ENCODE measurements at regions of chr5 and their contacts with region 1.

Region 1: DNA sequence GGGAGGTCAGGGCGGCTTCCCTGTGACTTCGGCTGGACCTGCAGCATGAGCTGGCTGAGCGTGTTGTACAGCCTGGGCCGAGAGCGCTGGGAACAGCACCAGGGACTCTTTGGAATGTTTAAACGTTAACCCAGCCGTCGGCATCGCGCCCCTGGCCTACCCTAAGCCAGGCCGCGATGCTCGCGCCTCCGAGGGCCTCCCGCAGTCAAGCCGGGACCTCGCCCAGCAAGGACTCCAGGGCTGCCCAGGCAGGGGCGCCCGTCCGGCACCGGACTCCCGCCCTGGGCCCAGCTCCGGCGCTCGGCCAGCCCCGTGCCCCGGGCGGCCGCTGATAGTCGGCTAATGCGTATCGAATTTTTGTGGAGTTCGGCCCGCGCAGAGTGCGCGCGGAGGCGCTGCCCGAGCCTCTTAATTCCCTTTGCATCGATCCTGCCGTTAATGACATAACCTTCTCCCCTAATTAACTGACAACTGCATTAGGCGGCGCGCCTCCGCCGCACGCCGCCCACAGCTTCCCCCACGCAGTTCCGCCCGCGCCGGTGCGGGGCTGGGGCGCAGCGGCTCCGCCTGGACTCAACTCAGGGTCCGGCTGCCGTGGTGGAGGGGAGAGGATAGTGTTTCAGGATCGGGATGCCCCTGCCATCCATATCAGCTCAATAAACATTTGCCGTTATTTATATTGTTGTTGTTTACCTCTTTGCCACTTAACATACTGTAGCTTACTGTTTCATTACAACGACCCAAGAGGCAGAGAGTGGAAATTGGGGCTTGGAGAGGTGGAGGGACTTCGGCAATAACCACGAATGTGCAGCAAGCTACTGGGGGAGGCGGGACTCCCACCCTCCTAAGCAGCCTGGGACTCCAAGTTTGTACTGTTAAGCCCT is 28.8 kb upstream of the CDC23 start:
- DNase-seq: peak; percentile 82

Region 2: GRCh38 chr5:138438724-138439476 is 197.0 kb after region 1 on chr5 and contains the start of gene REEP2:
- intact Hi-C with region 1: no loop called
- DNase-seq: no peak
- total RNA-seq, gene REEP2: 12.5 to 13.0 TPM

Region 3: DNA sequence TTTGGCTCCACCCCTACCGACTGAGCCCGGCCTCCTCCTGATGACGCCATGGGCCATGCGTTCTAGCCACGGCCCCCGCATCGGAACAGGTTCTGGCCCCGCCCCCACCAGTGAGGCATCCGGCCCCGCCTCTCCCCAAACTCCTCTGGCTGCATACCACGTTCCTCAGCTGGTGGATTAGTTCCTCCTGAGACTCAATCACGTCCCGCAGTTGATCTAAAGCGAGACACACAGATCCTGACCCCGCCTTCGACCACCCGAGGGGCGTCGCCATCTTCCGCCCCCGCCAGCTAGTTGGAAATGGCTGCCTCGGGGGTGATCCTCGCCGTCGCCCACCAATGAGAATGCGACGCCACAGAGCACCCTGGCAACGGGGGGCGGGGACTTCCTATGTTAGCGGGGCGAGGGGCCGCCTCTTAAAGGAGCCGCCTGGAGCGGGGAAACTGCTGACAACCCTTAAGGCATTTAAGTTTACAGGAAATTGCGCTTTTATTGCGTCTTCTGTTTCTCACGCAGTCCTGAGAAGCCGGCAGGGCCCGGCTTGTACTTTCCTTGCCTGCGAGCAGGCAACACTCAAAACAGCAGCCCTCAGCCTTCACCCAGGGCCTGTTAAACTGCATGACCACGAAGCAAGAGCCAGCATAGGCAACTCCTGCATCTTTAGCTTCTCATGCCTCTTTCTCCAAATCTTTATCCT is 1162.0 kb after region 1 on chr5 and contains the start of gene SPATA24:
- intact Hi-C with region 1: loop called in 1 of 2 experiments (anchors 10 kb)
- DNase-seq: peak; percentile 99
- total RNA-seq, gene SPATA24: 1.9 to 2.6 TPM